ENCODE measurements at regions of chr4 and their contacts with region 1.

Region 1: DNA sequence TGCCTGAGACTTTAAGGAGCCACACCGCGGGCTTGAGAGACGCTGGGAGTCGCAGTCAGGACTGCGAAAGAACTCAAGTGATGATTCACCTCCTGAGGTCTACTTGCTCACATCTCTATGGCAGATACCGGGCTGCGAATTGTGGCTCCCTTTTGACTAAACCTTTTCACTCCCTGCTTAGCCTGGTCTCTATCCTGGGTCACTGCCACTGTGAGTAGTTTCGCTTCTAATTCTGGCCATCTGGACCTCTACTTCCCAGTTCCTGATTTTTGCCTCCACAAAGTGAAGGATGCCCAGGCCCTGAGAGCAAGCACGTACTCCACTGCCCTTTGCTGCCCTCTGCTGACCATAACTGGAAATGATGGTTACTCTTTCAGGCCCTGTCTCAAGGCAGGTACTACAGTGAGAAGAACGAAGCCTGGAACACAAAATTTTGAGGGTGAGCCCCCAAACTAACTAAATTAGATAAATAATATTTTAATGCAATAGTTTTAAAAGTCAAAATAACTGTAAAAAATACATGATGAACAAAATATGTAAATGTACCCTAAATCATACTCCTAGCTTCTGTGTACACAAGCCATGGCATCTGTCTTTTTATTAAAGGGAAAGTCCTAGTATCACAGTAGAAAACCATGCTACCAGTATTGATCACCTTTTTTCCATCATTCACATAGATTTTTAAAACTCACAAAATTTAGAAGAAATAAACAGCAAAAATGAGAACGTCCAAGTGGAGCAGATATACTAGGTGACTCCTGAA is 16.7 kb downstream of the MAD2L1 start:
- DNase-seq: peak in 1 of 2 experiments; percentile 62
- H3K4me3 ChIP-seq: no peak overlapping the region
- H3K27ac ChIP-seq: no peak overlapping the region
- H3K4me1 ChIP-seq: no peaks in the 10 kb centered on the region
- H3K27me3 ChIP-seq: no peaks in the 10 kb centered on the region
- CTCF ChIP-seq: peak; percentile 84

Region 2: GRCh38 chr4:118981839-118982381 is 1068.0 kb before region 1 on chr4:
- CTCF ChIA-PET with region 1: interaction called, 3 read pairs
- POLR2A ChIA-PET with region 1: no interaction called
- intact Hi-C with region 1: loop called (anchors 5 kb)
- DNase-seq: peak; percentile 29 to 45
- H3K4me3 ChIP-seq: no peak overlapping the region
- H3K27ac ChIP-seq: no peak overlapping the region
- H3K4me1 ChIP-seq: no peaks in the 10 kb centered on the region
- H3K27me3 ChIP-seq: no peaks in the 10 kb centered on the region
- CTCF ChIP-seq: peak; percentile 81

Region 3: GRCh38 chr4:119489305-119489704 is 560.6 kb before region 1 on chr4:
- CTCF ChIA-PET with region 1: no interaction called
- POLR2A ChIA-PET with region 1: no interaction called
- intact Hi-C with region 1: loop called (anchors 10 kb)
- DNase-seq: no peak
- H3K4me3 ChIP-seq: no peak overlapping the region
- H3K27ac ChIP-seq: no peak overlapping the region
- H3K4me1 ChIP-seq: no peaks in the 10 kb centered on the region
- H3K27me3 ChIP-seq: no peaks in the 10 kb centered on the region
- CTCF ChIP-seq: no peak

Region 4: DNA sequence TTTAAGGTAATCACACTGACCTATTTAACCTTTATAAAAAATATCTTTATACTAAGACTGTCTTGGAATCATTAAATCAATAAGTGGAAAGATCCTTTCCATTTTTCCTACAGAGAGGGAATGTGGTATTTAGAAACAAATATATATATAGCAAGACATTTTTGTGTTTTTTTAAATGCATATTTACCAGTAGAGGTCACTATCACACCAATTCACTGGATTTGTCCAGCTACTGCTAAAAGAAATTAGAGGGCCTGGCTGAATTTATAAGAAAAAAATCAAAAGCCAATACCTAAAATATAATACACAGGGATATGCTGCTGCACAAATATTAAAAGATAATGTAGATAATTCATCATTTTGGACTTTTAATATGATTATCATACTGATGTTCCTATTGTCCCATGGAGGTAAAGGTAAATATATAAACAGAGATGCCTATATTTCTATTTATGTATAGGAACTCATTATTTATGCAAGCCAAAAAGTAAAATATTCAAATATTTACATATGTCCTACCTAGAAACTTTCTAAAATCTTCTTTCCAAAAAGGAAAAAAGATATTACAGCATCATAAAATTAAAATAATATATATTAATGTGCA is 490.8 kb before region 1 on chr4:
- CTCF ChIA-PET with region 1: no interaction called
- POLR2A ChIA-PET with region 1: no interaction called
- intact Hi-C with region 1: loop called (anchors 2 kb)
- DNase-seq: no peak
- H3K4me3 ChIP-seq: no peak overlapping the region
- H3K27ac ChIP-seq: no peak overlapping the region
- H3K4me1 ChIP-seq: no peaks in the 10 kb centered on the region
- H3K27me3 ChIP-seq: no peaks in the 10 kb centered on the region
- CTCF ChIP-seq: peak; percentile 73

Region 5: GRCh38 chr4:119835613-119835910 is 214.4 kb before region 1 on chr4:
- CTCF ChIA-PET with region 1: interaction called, 11 read pairs
- POLR2A ChIA-PET with region 1: no interaction called
- intact Hi-C with region 1: no loop called
- DNase-seq: no peak
- H3K4me3 ChIP-seq: no peak overlapping the region
- H3K27ac ChIP-seq: no peak overlapping the region
- H3K4me1 ChIP-seq: no peaks in the 10 kb centered on the region
- H3K27me3 ChIP-seq: no peaks in the 10 kb centered on the region
- CTCF ChIP-seq: no peak

Region 6: GRCh38 chr4:119854364-119854763 is 195.5 kb before region 1 on chr4:
- CTCF ChIA-PET with region 1: no interaction called
- POLR2A ChIA-PET with region 1: interaction called, 13 read pairs
- intact Hi-C with region 1: no loop called
- DNase-seq: no peak
- H3K4me3 ChIP-seq: no peak overlapping the region
- H3K27ac ChIP-seq: no peak overlapping the region
- H3K4me1 ChIP-seq: no peaks in the 10 kb centered on the region
- H3K27me3 ChIP-seq: no peaks in the 10 kb centered on the region
- CTCF ChIP-seq: no peak

Region 7: GRCh38 chr4:119984996-119985395 is 64.9 kb before region 1 on chr4:
- CTCF ChIA-PET with region 1: no interaction called
- POLR2A ChIA-PET with region 1: no interaction called
- intact Hi-C with region 1: no loop called
- DNase-seq: no peak
- H3K4me3 ChIP-seq: no peak overlapping the region
- H3K27ac ChIP-seq: no peak overlapping the region
- H3K4me1 ChIP-seq: no peaks in the 10 kb centered on the region
- H3K27me3 ChIP-seq: no peaks in the 10 kb centered on the region
- CTCF ChIP-seq: no peak

Measured in PC-9 (cell line).